GM12878 (cell line): ENCODE measurements at regions of chr6 and their contacts with region 1.

Region 1: DNA sequence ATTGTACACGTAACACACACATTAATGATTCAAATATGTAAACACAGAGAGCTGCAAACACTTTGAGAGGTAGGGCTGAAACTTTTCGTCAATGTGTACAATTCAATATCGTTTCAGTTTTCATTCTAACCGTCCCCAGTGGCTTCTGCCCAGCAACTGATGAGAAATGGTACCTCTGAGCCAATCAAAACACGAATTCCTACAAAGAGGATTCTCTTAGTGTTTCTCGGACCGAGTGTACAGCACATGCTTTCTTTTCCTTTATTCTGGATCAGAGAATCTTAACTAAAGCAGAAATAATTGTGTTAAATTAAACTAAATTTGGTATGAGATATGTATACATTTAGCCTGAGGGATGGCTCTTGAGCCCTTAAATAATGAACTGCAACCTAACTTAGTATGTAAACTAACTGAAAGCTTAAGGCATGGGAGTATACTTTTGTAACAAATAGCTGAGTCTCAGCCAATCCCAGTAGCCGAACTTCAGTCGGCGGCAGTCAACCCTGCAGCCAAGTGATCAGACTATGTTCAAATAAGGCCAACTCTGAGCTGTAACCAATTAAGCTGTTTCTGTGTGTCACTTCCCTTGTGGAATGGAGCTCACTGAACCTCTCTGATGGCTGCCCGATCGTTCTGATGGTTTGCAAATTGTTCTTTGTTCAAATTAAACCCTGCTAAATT is 16.1 kb downstream of the BTN2A1 start:
- DNase-seq: peak; percentile 97
- ATAC-seq: peak; percentile 95
- H3K4me3 ChIP-seq: peak overlapping the region; percentile 77
- H3K27ac ChIP-seq: peak overlapping the region; percentile 100
- H3K4me1 ChIP-seq: peaks cover 29% of the 10 kb centered on the region
- H3K27me3 ChIP-seq: no peaks in the 10 kb centered on the region
- CTCF ChIP-seq: no peak
- EP300 ChIP-seq: no peak; a peak in 1 of 4 replicates
- POLR2A ChIP-seq: peak; percentile 87
- RAD21 ChIP-seq: no peak

Region 2: DNA sequence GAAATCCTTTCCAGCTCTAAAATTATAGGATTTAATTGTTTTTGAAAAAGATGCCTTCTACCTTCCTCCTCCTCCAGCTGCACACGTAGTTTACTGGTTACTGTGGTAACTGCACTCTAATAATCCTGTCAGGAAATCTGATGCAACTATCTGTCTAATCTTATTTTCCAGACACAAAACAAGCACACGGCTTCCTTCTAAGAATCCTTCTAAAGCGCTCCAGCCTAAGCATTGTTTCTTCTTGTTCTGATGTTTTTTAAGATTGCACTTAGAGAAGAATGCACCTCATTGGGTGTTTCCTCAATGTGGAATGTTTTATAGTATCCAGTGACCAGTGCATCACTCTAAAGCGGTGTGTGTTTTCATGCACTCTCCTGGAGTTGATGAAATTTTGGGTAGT is 1131.1 kb before region 1 on chr6:
- CTCF ChIA-PET with region 1: no interaction called
- POLR2A ChIA-PET with region 1: no interaction called
- RAD21 ChIA-PET with region 1: no interaction called
- SMC1A ChIA-PET with region 1: no interaction called
- in situ Hi-C with region 1: no loop called
- intact Hi-C with region 1: no loop called
- DNase-seq: no peak
- ATAC-seq: no peak
- H3K4me3 ChIP-seq: no peak overlapping the region
- H3K27ac ChIP-seq: no peak overlapping the region
- H3K4me1 ChIP-seq: peaks cover 9% of the 10 kb centered on the region
- H3K27me3 ChIP-seq: 0 out of 4 replicates have a peak, but pooled peaks cover 0 to 2% of the 10 kb centered on the region in 2 experiments
- CTCF ChIP-seq: no peak
- EP300 ChIP-seq: no peak
- POLR2A ChIP-seq: no peak
- RAD21 ChIP-seq: no peak

Region 3: GRCh38 chr6:26439657-26440056 is 34.2 kb before region 1 on chr6:
- CTCF ChIA-PET with region 1: no interaction called
- POLR2A ChIA-PET with region 1: interaction called, 38 read pairs
- RAD21 ChIA-PET with region 1: interaction called, 27 read pairs
- SMC1A ChIA-PET with region 1: interaction called, 26 read pairs
- in situ Hi-C with region 1: no loop called
- intact Hi-C with region 1: loop called (anchors 1 kb)
- DNase-seq: no peak
- ATAC-seq: no peak; the same call in 2 of the 3 replicates
- H3K4me3 ChIP-seq: 0 out of 2 replicates have a peak overlapping the region, but pooled peaks have one; percentile 22
- H3K27ac ChIP-seq: peak overlapping the region; percentile 97; the same call in 1 of the 2 replicates
- H3K4me1 ChIP-seq: peaks cover 5% of the 10 kb centered on the region
- H3K27me3 ChIP-seq: no peaks in the 10 kb centered on the region
- CTCF ChIP-seq: no peak
- EP300 ChIP-seq: no peak
- POLR2A ChIP-seq: no peak
- RAD21 ChIP-seq: no peak

Region 4: DNA sequence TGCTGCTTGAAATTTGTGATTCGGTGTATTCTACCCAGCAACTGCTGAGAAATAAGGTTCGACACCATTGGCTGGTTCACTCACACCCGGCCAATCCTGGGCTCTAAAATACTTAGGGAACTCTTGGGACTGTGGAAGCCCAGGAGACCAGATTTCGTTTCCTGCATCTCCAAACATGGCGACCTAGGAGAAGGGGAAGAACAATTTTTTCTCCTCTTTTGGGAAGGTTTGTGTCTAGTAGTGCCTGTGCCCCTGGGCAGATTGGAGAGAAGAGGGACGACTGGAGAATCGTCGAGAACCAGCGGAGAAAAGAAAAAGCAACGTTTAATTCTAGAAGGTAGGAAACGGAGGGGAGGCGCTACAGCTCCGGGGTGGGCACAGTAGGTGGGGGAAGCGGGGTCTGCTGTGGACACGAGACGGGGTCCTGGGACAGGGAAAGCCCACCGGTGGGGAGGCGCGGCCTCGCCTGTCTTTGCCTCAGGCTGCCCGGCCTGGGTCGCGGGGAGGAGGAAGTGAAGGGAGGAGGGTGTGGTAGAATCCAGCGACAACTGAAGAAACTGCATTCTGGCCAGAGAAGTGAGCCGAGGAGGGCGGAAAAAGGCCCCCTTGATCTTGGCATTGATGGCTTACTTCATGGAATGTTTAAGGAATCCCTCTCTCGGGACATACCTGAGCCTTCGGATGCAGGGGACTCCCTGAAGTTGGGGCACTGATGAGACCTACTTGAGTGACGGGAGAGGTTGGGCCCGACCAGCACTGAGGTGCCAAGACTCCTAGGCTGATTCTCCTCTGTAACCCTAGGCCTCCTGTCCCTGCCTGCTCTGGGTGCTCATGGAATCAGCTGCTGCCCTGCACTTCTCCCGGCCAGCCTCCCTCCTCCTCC is 15.9 kb before region 1 on chr6 and contains the start of gene BTN2A1:
- CTCF ChIA-PET with region 1: interaction called, 6 read pairs
- POLR2A ChIA-PET with region 1: interaction called, 17 read pairs
- RAD21 ChIA-PET with region 1: interaction called, 4 read pairs
- SMC1A ChIA-PET with region 1: interaction called, 9 read pairs
- in situ Hi-C with region 1: no loop called
- intact Hi-C with region 1: no loop called
- DNase-seq: peak; percentile 70
- ATAC-seq: peak; percentile 98
- H3K4me3 ChIP-seq: peak within 1 kb of the TSS; percentile 85
- H3K27ac ChIP-seq: peak within 1 kb of the TSS; percentile 97
- H3K4me1 ChIP-seq: peaks cover 22% of the 10 kb centered on the region
- H3K27me3 ChIP-seq: no peaks in the 10 kb centered on the region
- CTCF ChIP-seq: no peak
- EP300 ChIP-seq: no peak
- POLR2A ChIP-seq: peak; percentile 66; the same call in 1 of the 2 replicates
- RAD21 ChIP-seq: no peak
- polyA plus RNA-seq, gene BTN2A1: 15.6 to 15.9 TPM

Region 5: DNA sequence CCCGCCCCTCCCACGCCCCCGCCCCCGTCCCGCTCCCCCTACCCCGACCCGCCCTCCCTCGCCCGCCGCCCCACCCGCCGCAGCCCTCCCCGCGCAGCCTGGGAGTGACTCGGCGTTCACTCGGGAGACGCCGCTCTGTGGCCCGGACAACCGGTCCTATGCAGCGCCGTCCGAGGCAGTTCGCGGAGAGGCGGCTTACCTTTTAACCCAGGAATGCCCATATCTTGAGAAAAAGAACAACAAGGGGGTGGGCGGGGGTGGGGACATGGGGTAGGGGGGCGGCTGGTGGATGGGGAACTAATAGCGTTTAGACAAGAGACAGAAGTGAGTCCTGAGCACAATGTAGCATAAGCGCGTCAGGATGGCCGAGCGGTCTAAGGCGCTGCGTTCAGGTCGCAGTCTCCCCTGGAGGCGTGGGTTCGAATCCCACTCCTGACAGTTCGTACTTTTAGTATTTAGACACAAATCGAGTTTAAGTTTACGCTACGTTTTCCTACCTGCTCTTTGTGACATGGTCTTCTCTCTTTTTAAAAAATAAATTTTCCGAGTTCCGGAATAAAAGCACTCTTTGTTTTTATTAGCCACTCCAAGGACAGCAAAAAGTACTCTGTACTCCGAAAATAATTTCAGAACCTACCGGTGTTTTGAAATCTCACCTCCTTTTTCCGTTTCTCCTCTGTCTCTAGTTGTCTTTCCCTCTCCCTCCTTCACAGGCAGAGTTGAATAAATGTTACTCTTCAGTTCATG is 47.1 kb after region 1 on chr6:
- CTCF ChIA-PET with region 1: no interaction called
- POLR2A ChIA-PET with region 1: interaction called, 16 read pairs
- RAD21 ChIA-PET with region 1: interaction called, 4 read pairs
- SMC1A ChIA-PET with region 1: interaction called, 12 read pairs
- in situ Hi-C with region 1: no loop called
- intact Hi-C with region 1: loop called (anchors 2 kb)
- DNase-seq: no peak
- ATAC-seq: peak; percentile 84
- H3K4me3 ChIP-seq: peak overlapping the region; percentile 57
- H3K27ac ChIP-seq: peak overlapping the region; percentile 88
- H3K4me1 ChIP-seq: peaks cover 6% of the 10 kb centered on the region
- H3K27me3 ChIP-seq: no peaks in the 10 kb centered on the region
- CTCF ChIP-seq: no peak
- EP300 ChIP-seq: peak in 1 of 2 experiments; percentile 64; a peak in 1 of 4 replicates
- POLR2A ChIP-seq: peak; percentile 77
- RAD21 ChIP-seq: no peak

Region 6: GRCh38 chr6:26537846-26538571 is 64.1 kb after region 1 on chr6 and contains the start of gene HMGN4:
- CTCF ChIA-PET with region 1: interaction called, 3 read pairs
- POLR2A ChIA-PET with region 1: interaction called, 8 read pairs
- RAD21 ChIA-PET with region 1: interaction called, 16 read pairs
- SMC1A ChIA-PET with region 1: interaction called, 12 read pairs
- in situ Hi-C with region 1: no loop called
- intact Hi-C with region 1: no loop called
- DNase-seq: peak; percentile 96
- ATAC-seq: peak; percentile 81
- H3K4me3 ChIP-seq: peak within 1 kb of the TSS; percentile 86
- H3K27ac ChIP-seq: peak within 1 kb of the TSS; percentile 99
- H3K4me1 ChIP-seq: peaks cover 14% of the 10 kb centered on the region
- H3K27me3 ChIP-seq: no peaks in the 10 kb centered on the region
- CTCF ChIP-seq: 0 out of 6 replicates have a peak, but pooled peaks of 1 of the 3 experiments have one; percentile 8
- EP300 ChIP-seq: peak in 1 of 2 experiments; percentile 74; a peak in 1 of 4 replicates
- POLR2A ChIP-seq: peak; percentile 84
- RAD21 ChIP-seq: no peak
- polyA plus RNA-seq, gene HMGN4: 26.7 to 31.2 TPM

Region 7: DNA sequence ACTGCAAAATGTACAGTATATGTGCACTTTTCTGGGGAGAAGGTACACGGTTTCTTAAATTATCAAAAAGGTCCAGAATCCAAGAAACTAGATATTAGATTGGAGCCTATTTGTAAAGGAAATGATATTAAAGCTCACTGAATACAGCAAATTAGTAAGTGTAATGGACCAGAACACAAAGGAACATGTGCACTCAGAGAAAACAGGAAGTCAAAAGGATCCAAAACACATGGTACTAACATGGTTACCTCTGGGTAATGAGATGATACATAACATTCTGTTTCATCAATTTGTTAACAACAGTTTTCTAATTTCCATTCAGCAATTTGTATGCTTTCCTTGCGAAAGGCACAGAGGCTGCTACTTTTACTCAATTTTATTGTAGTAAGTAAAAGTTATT is 166.9 kb after region 1 on chr6:
- CTCF ChIA-PET with region 1: no interaction called
- POLR2A ChIA-PET with region 1: no interaction called
- RAD21 ChIA-PET with region 1: no interaction called
- SMC1A ChIA-PET with region 1: no interaction called
- in situ Hi-C with region 1: no loop called
- intact Hi-C with region 1: no loop called
- DNase-seq: no peak
- ATAC-seq: no peak
- H3K4me3 ChIP-seq: no peak overlapping the region
- H3K27ac ChIP-seq: no peak overlapping the region
- H3K4me1 ChIP-seq: no peaks in the 10 kb centered on the region
- H3K27me3 ChIP-seq: no peaks in the 10 kb centered on the region
- CTCF ChIP-seq: no peak
- EP300 ChIP-seq: no peak
- POLR2A ChIP-seq: no peak
- RAD21 ChIP-seq: no peak